ENCODE measurements at regions of chr7 and their contacts with region 1.

Region 1: DNA sequence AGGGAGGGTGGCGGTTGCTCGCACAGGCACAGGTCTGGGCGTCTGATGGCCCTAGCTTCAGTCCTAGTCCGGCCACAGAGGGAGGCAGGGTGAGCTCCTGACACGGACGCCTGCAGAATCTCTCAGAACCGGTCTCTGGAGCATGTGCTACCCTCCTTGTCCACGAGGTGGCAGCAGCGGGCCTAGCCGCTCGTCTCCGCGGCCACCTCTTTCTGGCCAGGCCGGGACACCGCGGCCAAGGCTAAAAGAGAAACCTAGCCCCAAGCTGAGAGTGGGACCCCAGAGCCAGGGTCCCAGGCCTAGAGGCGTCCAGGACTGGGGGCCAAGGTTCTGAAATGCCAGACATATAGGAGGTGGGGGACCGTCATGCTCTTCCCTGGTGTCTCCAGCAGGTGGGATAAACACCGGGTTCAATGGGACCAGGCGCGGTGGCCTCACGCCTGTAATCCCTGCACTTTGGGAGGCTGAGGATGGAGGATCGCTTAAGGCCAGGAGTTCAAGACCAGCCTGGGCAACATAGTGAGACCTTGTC is 3.2 kb upstream of the LAT2 start:
- DNase-seq: peak; percentile 63 to 99
- H3K4me3 ChIP-seq: no peak overlapping the region
- H3K27ac ChIP-seq: no peak overlapping the region
- H3K4me1 ChIP-seq: 0 out of 7 replicates have a peak, but pooled peaks cover 0 to 2% (median 0%) of the 10 kb centered on the region in 4 experiments
- H3K27me3 ChIP-seq: no peaks in the 10 kb centered on the region
- CTCF ChIP-seq: peak; percentile 93 to 99 (median 95)
- EP300 ChIP-seq: no peak
- POLR2A ChIP-seq: no peak
- RAD21 ChIP-seq: peak; percentile 82 to 89

Region 2: DNA sequence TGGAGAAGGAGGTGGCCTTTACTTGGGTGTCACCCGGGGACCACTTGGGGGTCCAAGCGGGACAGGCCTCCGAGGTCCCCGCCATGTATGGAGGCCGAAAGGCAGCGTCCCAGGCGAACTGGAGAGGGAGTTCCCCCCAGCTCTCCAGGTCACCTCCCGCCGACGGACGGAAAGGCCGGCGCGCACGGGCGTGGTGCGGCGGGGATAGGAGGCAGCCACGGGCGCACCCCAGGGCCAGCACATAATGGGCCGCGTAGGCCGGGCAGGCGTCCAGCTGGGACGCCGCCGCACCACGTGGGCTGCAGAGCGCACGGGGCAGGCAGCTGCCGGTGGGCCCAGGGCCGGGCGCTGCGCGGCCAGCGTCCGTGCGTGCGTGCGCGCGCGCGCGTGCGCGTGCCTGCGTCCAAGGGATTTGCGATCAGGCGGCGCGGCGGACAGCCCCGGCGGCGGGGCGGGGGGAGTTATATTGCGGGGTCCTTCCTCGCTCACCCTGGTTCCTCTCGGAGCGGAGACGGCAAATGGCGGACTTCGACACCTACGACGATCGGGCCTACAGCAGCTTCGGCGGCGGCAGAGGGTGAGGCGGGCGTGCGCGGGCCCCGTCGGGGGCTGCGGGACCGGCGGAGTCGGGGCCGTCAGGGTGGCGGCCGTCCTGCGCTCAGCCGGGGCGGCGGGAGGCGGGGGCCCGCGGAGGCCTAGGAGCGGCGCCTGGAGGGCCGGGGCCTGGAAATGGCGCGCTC is 32.6 kb before region 1 on chr7 and contains the start of gene EIF4H:
- CTCF ChIA-PET with region 1: interaction called, 15 read pairs
- POLR2A ChIA-PET with region 1: interaction called, 5 read pairs
- DNase-seq: peak; percentile 84 to 100
- H3K4me3 ChIP-seq: peak within 1 kb of the TSS; percentile 67 to 97 (median 80)
- H3K27ac ChIP-seq: peak within 1 kb of the TSS; percentile 94
- H3K4me1 ChIP-seq: peaks cover 2 to 14% (median 6%) of the 10 kb centered on the region in 4 experiments; a peak in 6 of 7 replicates
- H3K27me3 ChIP-seq: no peaks in the 10 kb centered on the region
- CTCF ChIP-seq: no peak; a peak in 1 of 4 replicates
- EP300 ChIP-seq: no peak
- POLR2A ChIP-seq: peak; percentile 91 to 95
- RAD21 ChIP-seq: no peak
- total RNA-seq, gene EIF4H: 359 and 382 TPM in 2 replicates

Region 3: DNA sequence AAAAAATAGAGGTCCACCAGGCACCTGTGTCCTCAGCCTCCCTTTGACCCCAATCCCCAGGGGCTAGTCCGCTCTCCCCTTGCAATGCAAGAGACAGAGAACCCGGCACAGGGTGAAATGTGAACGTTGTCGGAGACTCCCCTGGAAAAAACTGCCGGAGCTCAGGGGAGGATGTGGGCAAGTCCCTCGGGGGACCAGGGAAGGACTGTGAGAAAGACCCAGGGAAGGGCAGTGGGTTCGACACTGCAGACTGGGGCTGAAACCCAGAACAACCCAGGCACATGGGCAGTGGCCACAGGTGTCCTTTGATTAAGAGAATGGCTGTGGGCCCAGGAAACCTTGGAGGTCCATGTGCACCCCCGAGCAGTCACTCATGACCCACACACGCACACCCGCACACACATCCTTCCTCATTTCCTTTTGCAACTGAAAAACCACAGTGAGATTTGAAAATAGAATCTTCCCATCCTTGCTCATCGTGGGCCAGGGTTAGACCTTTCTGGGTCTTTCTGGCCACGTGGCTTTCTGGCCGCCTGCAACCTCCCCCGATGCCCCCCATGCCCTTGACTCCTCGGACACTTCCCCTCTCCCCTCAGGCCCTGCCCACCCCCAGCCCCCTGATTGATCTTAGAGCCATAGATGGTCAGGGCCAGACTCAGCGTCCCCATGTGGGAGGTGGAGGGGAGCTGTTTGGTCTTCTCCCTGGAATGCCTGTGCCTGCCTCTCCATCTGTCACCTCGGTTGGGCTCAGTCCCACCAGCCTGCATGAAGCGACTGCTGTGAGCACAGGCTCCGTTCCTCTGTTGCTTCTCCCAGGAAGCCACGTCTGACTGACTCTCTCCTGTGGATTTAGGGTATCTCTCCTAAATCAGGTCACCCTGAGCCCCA is 11.0 kb after region 1 on chr7:
- CTCF ChIA-PET with region 1: interaction called, 71 read pairs
- POLR2A ChIA-PET with region 1: interaction called, 4 read pairs
- DNase-seq: no peak
- H3K4me3 ChIP-seq: no peak overlapping the region
- H3K27ac ChIP-seq: no peak overlapping the region
- H3K4me1 ChIP-seq: peaks cover 0 to 2% (median 0%) of the 10 kb centered on the region in 4 experiments; a peak in 4 of 7 replicates
- H3K27me3 ChIP-seq: no peaks in the 10 kb centered on the region
- CTCF ChIP-seq: no peak
- EP300 ChIP-seq: no peak
- POLR2A ChIP-seq: no peak
- RAD21 ChIP-seq: no peak

Region 4: GRCh38 chr7:74231232-74231590 is 24.6 kb after region 1 on chr7:
- CTCF ChIA-PET with region 1: interaction called, 10 read pairs
- POLR2A ChIA-PET with region 1: no interaction called
- DNase-seq: no peak
- H3K4me3 ChIP-seq: no peak overlapping the region
- H3K27ac ChIP-seq: no peak overlapping the region
- H3K4me1 ChIP-seq: no peaks in the 10 kb centered on the region
- H3K27me3 ChIP-seq: no peaks in the 10 kb centered on the region
- CTCF ChIP-seq: no peak
- EP300 ChIP-seq: no peak
- POLR2A ChIP-seq: no peak
- RAD21 ChIP-seq: no peak

Region 5: GRCh38 chr7:74289018-74289658 is 82.5 kb after region 1 on chr7 and contains the start of gene CLIP2:
- CTCF ChIA-PET with region 1: interaction called, 20 read pairs
- POLR2A ChIA-PET with region 1: no interaction called
- DNase-seq: peak in 1 of 2 experiments; percentile 82
- H3K4me3 ChIP-seq: peak within 1 kb of the TSS; percentile 79 to 97 (median 84)
- H3K27ac ChIP-seq: no peak within 1 kb of the TSS
- H3K4me1 ChIP-seq: peaks cover 9 to 44% (median 29%) of the 10 kb centered on the region in 4 experiments
- H3K27me3 ChIP-seq: peaks cover 0 to 4% (median 0%) of the 10 kb centered on the region in 4 experiments; a peak in 3 of 7 replicates
- CTCF ChIP-seq: no peak
- EP300 ChIP-seq: no peak
- POLR2A ChIP-seq: peak in 1 of 2 experiments; percentile 34; a peak in 1 of 3 replicates
- RAD21 ChIP-seq: no peak; a peak in 1 of 4 replicates
- total RNA-seq, gene CLIP2: 39.8 and 41.5 TPM in 2 replicates

Region 6: DNA sequence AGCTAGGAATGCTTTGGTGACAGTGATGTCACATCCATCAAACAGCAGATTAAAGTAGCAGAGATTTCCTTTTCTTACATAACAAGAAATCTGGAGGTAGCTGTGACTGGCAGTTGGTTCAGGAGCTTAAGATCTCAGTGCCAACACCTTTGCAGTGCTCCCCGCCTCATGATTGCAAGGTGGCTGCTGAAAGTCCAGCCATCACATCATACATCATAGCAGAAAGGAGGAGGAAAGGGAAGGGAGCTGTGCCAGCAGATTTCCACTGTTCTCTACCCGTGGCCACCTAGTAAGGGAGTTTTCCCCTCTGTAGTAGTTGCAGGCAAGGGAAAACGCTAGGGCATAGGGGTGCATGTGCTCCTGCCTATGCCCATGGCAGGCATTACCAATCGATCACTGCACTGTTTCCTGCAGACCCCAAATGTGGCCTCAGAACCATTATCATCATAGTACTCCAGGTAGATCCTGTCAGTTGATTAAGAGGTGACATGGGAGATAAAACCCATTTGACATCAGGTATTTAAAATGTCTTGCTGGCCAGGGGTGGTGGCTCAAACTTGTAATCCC is 189.2 kb after region 1 on chr7:
- CTCF ChIA-PET with region 1: interaction called, 132 read pairs
- POLR2A ChIA-PET with region 1: no interaction called
- DNase-seq: no peak
- H3K4me3 ChIP-seq: no peak overlapping the region
- H3K27ac ChIP-seq: no peak overlapping the region
- H3K4me1 ChIP-seq: peaks cover 0 to 4% (median 0%) of the 10 kb centered on the region in 4 experiments; a peak in 1 of 7 replicates
- H3K27me3 ChIP-seq: no peaks in the 10 kb centered on the region
- CTCF ChIP-seq: no peak
- EP300 ChIP-seq: no peak
- POLR2A ChIP-seq: no peak
- RAD21 ChIP-seq: no peak

Measured in H1 (cell line).